BJ (cell line): ENCODE measurements at regions of chr11 and their contacts with region 1.

Region 1: DNA sequence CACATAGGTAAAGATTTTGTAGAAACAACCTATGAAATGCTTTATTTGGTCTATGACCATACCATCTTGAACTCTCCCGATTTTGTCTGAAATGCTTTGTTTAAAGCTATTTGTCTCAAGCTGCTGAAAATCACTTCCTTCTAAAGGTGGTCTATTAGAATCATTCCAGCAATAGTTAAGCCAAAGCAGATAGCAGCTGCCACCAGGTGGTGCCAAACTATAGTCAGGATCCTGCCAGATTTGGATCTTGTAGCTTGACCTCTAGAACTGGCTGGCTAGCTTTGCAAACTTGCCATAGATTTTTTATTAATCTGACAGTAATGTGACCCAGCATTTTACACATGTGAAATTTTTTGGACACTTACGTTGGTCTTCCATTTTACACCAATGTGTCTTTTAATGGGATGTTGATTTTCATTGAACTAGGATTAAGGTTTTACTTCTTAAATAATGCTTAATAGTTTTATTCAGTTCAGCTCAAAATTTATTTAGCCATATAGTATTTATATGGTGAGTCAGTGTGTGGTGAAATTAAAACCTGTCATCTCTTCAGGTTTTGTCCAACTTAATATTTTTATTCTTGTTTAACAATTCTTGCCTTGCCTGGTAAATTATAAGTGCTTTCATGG is 19.7 kb downstream of the CTR9 start:
- DNase-seq: no peak
- H3K4me3 ChIP-seq: no peak overlapping the region
- H3K27me3 ChIP-seq: no peaks in the 10 kb centered on the region
- CTCF ChIP-seq: peak; percentile 83

Region 2: GRCh38 chr11:10784232-10785145 is 13.7 kb after region 1 on chr11:
- CTCF ChIA-PET with region 1: interaction called, 13 read pairs
- POLR2A ChIA-PET with region 1: no interaction called
- DNase-seq: no peak
- H3K4me3 ChIP-seq: no peak overlapping the region
- H3K27me3 ChIP-seq: no peaks in the 10 kb centered on the region; the same call in 1 of the 2 replicates
- CTCF ChIP-seq: no peak